Activated CD8-positive, alpha-beta memory T cell treated with anti-CD3 and anti-CD28 coated beads, Interleukin-2, amount 10 ng/mL, durations not matched to agents 7 days and 5 days (primary cell): ENCODE measurements at regions of chr17 and their contacts with region 1.

Region 1: DNA sequence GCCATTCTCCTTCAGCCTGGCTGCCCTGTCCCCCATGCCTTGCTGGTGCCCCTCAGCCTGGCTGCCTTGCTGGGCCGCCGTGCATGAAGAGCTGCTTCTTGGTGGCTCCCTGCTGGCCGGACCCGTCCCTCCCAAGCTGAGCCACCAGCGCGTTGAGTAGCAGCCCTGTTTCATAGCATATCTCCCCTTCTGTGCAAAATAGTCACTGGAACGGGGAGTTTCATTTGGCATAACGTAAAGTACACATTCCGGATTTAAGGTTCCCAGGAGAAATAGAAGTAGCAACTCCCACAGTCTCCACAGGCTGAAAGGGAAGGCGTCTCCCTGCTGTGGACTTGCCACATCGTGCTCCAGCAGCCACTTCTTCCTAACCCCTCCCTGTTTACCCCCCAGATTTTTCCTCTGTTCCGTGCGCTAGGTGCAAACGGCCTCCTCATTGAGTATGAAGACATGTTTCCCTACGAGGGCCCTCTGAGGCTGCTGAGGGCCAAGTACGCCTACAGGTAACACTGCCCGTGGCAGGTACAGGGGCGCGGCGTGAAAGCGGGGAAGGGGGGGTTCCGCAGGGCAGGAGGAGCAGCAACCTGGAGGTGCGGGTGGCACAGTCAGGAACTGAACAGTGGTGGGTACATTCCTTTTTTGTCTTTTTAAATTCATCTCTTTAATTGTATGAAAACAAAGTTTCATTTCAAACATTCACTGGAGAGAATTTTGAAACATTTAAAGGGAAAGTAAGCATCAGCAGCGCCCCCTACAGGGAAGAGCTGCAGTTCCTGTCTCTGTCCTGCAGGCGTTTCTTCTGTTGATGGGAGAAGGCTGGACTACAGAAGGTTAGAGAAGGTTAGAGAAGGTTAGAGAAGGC is 5.8 kb upstream of the OGFOD3 start:
- DNase-seq: peak; percentile 74
- ATAC-seq: peak; percentile 59
- H3K4me3 Mint-ChIP-seq: no peak overlapping the region
- H3K27ac Mint-ChIP-seq: peak overlapping the region; percentile 35
- H3K4me1 Mint-ChIP-seq: peaks cover 26% of the 10 kb centered on the region
- H3K27me3 Mint-ChIP-seq: no peaks in the 10 kb centered on the region

Region 2: DNA sequence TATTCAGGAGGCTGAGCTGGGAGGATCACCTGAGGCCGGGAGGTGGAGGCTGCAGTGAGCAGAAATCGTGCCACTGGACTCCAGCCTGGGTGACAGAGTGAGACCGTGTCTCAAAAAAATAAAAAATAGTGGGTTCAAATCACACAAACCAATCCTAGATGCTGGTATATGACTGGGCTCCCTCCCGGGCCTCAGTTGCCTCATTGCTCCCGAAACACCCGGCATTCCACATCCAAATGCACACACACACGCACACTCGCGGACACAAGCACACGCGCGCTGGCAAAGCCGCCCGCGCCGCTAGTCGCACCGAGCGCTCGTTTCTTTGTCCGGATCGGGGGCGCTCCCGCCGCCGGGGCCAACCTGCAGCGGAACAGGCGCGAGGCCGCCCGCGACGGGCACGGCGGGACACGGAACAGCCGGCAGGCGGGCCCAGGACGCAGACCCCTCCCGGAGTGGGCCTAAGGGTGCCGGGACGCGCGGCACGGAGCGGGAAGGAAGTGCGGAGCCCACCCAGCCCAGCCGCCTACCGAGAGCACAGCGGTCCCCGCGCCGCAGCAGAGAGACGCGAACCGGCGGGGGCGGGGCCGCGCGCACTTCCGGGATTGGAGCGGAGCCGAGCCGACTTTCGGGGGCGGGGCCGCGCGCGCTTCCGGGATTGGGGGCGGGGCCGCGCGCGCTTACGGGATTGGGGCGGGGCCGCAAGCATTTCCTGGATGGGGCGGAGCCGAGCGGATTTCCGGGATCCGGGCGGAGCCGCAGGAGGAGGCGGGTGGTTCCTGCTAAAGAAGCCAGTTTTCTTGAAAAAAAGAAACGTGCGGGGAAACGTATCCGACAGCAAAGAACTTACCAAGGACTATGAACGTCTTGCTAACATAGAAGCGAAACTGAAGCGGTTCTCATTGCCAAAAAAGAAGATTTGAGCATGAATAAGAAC is 26.2 kb after region 1 on chr17 and contains the start of gene CYBC1:
- CTCF ChIA-PET with region 1: interaction called, 12 read pairs
- DNase-seq: peak; percentile 96
- ATAC-seq: peak; percentile 86
- H3K4me3 Mint-ChIP-seq: peak within 1 kb of the TSS; percentile 91
- H3K27ac Mint-ChIP-seq: peak within 1 kb of the TSS; percentile 95
- H3K4me1 Mint-ChIP-seq: peaks cover 46% of the 10 kb centered on the region
- H3K27me3 Mint-ChIP-seq: no peaks in the 10 kb centered on the region
- total RNA-seq, gene CYBC1: 269 to 378 TPM